ENCODE measurements at regions of chr1 and their contacts with region 1.

Region 1: GRCh38 chr1:2412519-2413233 is at the start of gene PEX10:
- DNase-seq: peak; percentile 99
- ATAC-seq: peak; percentile 92
- H3K4me3 Mint-ChIP-seq: peak within 1 kb of the TSS; percentile 90
- H3K27ac Mint-ChIP-seq: peak within 1 kb of the TSS; percentile 87
- H3K4me1 Mint-ChIP-seq: peaks cover 36% of the 10 kb centered on the region
- H3K27me3 Mint-ChIP-seq: no peaks in the 10 kb centered on the region
- CTCF ChIP-seq: no peak
- total RNA-seq, gene PEX10: 17.1 to 19.0 TPM

Region 2: DNA sequence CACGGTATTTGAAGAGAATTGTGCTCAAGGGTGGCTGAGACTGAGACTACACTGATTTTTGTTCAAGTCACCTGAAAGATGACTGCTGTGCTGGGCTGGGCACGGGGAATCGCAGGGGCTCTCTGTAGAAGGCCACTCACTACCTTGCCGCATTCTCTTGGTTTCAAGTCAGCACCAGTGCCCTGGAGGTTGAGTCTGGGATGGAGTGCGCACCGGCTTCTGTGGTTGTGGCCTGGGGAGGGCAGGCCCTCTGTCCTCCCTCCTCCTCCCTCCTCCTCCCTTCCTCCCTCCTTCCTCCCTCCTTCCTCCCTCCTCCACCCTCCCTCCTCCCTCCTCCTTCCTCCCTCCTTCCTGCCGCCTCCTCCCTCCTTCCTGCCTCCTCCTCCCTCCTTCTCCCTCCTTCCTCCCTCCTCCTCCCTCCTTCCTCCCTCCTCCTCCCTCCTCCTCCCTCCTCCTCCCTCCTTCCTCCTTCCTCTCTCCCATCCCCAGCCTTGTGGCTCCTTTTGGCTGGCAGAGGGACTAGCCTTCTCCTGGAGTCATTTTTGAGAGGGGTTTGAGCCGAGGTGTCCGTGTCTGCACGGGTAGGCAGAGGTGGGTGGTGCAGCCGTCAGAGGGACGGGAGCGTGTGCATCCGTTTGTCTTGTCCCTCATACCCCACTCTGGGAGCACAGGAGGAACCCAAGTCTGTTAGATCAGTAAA is 11.6 kb before region 1 on chr1:
- CTCF ChIA-PET with region 1: no interaction called
- POLR2A ChIA-PET with region 1: interaction called, 36 read pairs
- intact Hi-C with region 1: no loop called
- DNase-seq: no peak
- ATAC-seq: peak; percentile 34
- H3K4me3 Mint-ChIP-seq: no peak overlapping the region
- H3K27ac Mint-ChIP-seq: no peak overlapping the region
- H3K4me1 Mint-ChIP-seq: peaks cover 13% of the 10 kb centered on the region
- H3K27me3 Mint-ChIP-seq: no peaks in the 10 kb centered on the region
- CTCF ChIP-seq: no peak

Region 3: GRCh38 chr1:2525920-2526823 is 113.5 kb after region 1 on chr1 and contains the start of gene PANK4:
- CTCF ChIA-PET with region 1: interaction called, 11 read pairs
- POLR2A ChIA-PET with region 1: interaction called, 4 read pairs
- intact Hi-C with region 1: loop called (anchors 2 kb)
- DNase-seq: peak; percentile 94
- ATAC-seq: peak; percentile 83
- H3K4me3 Mint-ChIP-seq: peak within 1 kb of the TSS; percentile 81
- H3K27ac Mint-ChIP-seq: peak within 1 kb of the TSS; percentile 98
- H3K4me1 Mint-ChIP-seq: peaks cover 47% of the 10 kb centered on the region
- H3K27me3 Mint-ChIP-seq: peaks cover 7% of the 10 kb centered on the region
- CTCF ChIP-seq: no peak
- total RNA-seq, gene PANK4: 39.0 to 40.6 TPM

Region 4: DNA sequence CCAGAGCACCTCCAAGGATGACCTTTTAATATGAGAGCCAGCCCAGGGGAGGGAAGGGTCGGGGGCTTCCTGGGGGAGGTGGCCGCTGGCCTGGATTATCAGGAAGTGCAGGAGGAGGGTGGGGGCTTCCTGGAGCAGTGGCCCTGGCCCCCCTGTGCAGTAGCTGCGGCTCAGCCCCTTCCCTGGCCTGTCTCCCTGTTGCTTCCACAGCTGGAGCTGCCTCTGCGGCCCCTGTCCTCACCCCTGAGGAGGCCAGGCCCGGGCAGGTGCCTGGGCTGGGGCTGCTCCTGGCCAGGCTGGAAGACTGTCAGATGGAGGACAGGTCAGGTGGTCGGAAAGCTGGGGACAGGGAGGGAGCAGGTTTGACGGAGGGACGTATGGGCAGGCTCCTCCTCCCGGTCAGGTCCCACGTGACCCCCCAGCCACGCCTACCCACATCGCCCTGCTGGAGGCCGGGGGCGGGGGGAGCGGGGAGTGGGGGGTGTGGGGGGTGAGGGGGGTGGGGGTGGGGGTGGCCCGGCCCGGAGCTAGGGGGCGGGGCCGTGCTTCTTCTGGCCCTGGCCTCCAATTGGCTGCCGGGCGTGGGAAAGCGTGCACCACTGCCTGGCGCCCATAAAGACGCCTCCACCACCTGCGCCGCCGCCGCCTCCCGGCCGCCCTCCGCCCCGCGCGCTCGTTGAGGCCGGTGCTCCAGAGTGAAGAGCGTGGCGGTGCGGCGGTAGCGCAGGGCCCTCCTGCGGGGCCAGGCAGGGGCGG is 133.3 kb after region 1 on chr1:
- CTCF ChIA-PET with region 1: interaction called, 25 read pairs
- POLR2A ChIA-PET with region 1: interaction called, 21 read pairs
- intact Hi-C with region 1: loop called (anchors 5 kb)
- DNase-seq: peak; percentile 94
- ATAC-seq: peak; percentile 47
- H3K4me3 Mint-ChIP-seq: peak overlapping the region; percentile 83
- H3K27ac Mint-ChIP-seq: peak overlapping the region; percentile 98
- H3K4me1 Mint-ChIP-seq: peaks cover 24% of the 10 kb centered on the region
- H3K27me3 Mint-ChIP-seq: no peaks in the 10 kb centered on the region
- CTCF ChIP-seq: no peak

Region 5: DNA sequence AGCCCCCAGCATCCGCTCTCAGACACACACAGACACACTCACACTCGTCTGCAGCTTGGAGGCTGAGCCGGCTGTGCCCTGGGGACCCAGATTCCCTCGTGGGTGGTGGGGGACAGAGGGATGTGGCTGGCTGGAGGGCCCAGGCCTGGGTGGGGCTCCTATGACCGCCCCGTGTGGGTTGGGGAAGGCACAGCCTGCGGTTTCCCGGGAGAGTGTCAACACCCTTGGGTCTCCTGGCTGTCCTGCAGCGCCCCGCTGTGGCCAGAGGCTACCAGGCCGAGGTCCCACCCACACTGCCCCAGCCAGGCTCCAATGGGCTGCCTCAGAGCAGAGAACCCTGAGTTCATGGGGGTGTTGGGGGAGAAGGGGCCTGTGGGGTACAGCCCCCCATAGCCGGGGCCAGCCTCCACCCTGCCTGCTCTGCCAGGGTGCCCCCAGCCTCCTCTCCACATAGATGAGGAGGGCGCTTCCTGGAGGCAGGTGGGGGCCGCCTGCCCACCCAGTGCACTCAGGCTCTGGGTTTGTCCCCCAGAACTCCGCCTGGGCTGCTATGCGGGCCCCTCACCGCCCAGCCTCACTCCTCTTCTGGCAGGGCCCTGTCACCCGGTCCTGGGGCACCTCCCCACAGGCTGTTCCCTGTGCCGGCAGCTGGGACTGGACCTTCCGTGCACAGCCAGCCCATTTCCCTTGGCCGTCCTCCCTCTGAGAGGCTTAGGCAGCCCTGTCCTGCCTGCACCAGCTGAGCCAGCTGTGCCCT is 389.0 kb after region 1 on chr1 and contains the start of gene TTC34:
- CTCF ChIA-PET with region 1: no interaction called
- POLR2A ChIA-PET with region 1: no interaction called
- intact Hi-C with region 1: no loop called
- DNase-seq: peak; percentile 75
- ATAC-seq: peak; percentile 95
- H3K4me3 Mint-ChIP-seq: no peak within 1 kb of the TSS
- H3K27ac Mint-ChIP-seq: no peak within 1 kb of the TSS
- H3K4me1 Mint-ChIP-seq: no peaks in the 10 kb centered on the region
- H3K27me3 Mint-ChIP-seq: peaks cover 3% of the 10 kb centered on the region
- CTCF ChIP-seq: peak; percentile 37
- total RNA-seq, gene TTC34: 0.79 to 0.81 TPM